Prostate gland (tissue), 2 donors: ENCODE measurements at regions of chr19 and their contacts with region 1.

Region 1: GRCh38 chr19:3984908-3985642 is at the start of gene EEF2:
- DNase-seq: peak; percentile 86
- H3K4me3 ChIP-seq: peak within 1 kb of the TSS; percentile 91 to 96
- H3K27ac ChIP-seq: peak within 1 kb of the TSS; percentile 97 to 98
- H3K4me1 ChIP-seq: peaks cover 16% of the 10 kb centered on the region
- H3K27me3 ChIP-seq: no peaks in the 10 kb centered on the region
- CTCF ChIP-seq: peak in 1 of 4 experiments; percentile 19
- POLR2A ChIP-seq: peak; percentile 99
- total RNA-seq, gene EEF2: 1,974 to 1,998 TPM

Region 2: DNA sequence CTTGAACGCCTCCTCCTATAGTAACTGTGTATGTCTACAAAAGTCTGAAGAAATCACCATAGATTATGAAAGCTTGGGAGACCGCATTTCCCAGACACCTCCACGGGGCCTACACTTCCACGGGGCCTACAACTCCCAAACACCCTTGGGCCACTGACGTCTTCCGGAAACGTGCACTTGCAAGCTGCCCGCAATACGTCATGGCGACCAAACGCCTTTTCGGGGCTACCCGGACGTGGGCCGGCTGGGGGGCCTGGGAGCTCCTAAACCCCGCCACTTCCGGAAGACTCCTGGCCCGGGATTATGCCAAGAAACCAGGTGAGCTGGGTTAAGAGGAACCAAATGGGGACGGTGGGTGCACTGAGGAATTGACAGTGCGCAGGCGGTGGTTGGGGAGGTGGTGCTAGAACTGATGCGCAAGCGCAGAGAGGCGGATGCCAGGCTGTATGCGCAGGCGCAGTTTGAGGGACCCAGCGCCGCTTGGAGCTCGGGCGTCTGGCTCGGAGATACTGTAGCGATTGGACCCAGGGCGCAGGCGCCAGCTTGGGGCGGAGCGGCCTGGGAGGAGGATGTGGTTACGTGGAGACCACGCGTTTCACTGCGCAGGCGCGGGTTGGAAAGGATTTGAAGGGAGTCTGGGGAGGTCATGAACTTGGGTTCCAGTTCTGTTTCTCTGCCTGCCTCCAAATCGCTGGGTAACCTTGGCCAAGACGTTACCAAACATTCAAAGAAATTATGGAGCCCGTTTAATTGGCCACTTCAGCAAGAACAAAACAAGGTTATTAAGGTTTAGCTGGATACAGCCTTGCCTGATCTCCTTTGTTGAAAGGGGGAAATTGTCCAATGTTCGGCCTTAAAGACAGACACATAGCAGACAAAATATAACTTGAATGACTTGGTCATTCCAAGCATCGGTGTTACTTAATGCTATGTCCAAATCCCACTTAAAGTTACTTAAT is 222.3 kb before region 1 on chr19 and contains the start of gene MRPL54:
- intact Hi-C with region 1: loop called (anchors 5 kb)
- DNase-seq: peak; percentile 99
- H3K4me3 ChIP-seq: peak within 1 kb of the TSS; percentile 66 to 78
- H3K27ac ChIP-seq: peak within 1 kb of the TSS; percentile 96 to 99
- H3K4me1 ChIP-seq: peaks cover 3% of the 10 kb centered on the region
- H3K27me3 ChIP-seq: no peaks in the 10 kb centered on the region
- CTCF ChIP-seq: peak in 2 of 4 experiments; percentile 27 to 28
- POLR2A ChIP-seq: peak; percentile 51
- total RNA-seq, gene MRPL54: 69.7 to 105 TPM

Region 3: DNA sequence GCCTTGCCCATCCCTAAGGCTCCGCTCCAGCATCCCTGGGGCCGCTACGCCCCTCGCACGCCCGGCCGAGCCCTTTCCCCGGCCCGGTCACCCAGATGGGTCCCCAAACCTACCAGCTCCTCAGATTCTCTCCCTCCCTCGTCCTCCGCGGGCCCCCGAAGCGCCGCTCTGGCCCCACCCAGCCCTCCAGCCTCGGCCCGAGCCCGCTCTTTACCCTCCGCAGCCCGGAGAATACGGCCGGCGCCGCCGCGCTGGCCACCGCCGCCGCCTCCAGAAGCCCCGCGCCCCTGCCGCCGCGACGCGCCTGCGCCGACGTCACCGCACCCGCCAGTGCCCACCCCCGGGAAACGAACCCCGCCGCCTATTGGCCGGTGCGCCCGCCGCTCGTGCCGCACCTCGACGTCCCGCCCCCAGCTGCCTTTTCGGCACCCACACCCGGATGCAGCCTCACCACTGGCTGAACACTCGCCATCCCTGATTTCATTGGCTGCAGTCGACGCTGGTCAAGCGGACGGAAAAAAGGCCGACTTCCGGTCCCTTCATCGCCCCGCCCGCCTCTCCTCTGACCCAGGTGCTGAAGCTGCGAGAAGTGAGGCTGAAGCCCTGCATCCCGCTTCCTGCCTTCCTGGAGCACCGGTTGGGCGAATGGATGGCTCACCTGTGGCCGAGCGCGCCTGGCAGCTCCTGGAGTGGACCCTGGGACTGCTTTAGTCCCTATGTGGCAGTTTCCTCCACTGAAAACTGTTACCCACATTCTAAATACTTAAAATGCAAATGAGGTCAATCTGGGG is 14.1 kb before region 1 on chr19 and contains the start of gene DAPK3:
- intact Hi-C with region 1: loop called (anchors 2 kb)
- DNase-seq: peak; percentile 98
- H3K4me3 ChIP-seq: peak within 1 kb of the TSS; percentile 97 to 99
- H3K27ac ChIP-seq: peak within 1 kb of the TSS; percentile 94 to 97
- H3K4me1 ChIP-seq: peaks cover 7% of the 10 kb centered on the region
- H3K27me3 ChIP-seq: no peaks in the 10 kb centered on the region
- CTCF ChIP-seq: peak; percentile 27 to 83 (median 48)
- POLR2A ChIP-seq: peak; percentile 93
- total RNA-seq, gene DAPK3: 87.1 to 107 TPM

Region 4: DNA sequence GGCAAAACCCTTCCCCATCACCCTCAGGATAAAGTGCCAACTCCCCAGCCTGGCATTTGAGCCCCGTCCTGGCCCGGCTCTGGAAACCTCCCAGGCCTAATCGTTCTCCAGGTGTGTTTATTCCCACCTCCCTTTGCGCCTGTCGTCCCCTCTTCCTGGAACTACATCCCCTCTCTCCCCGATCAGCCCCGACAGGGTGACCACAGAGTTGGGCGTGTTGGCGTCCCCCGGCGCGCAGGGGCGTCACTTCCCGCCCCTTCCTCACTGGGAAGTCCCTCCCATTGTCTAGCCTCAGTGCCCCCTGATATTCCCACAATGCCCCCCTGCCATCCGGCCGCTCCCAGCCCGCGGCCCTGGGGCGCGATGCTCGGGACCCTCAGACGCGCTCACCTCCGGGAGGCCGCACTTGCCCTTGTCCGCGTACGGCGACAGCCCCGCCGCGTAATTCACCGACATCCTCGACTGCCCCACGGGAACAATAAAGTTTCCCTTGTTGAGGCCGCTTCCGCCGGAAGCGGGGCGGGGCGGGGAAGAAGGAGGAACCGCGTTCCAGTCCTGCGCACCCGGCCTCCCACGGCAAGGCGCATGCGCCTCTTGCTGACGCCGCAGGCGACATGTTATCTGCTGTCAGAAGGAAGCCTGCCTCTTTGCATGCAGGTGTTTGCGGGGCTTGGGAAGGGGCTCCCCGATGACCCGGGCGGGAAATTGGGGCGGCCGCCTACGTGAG is 197.2 kb after region 1 on chr19 and contains the starts of genes ANKRD24 and SIRT6:
- intact Hi-C with region 1: loop called (anchors 5 kb)
- DNase-seq: peak; percentile 95
- H3K4me3 ChIP-seq: peak within 1 kb of the TSS; percentile 92 to 96
- H3K27ac ChIP-seq: peak within 1 kb of the TSS; percentile 78 to 83
- H3K4me1 ChIP-seq: peaks cover 9% of the 10 kb centered on the region
- H3K27me3 ChIP-seq: no peaks in the 10 kb centered on the region
- CTCF ChIP-seq: peak in 2 of 4 experiments; percentile 10 to 30
- POLR2A ChIP-seq: peak; percentile 65
- total RNA-seq, gene ANKRD24: 3.6 to 12.0 TPM
- total RNA-seq, gene SIRT6: 23.5 to 37.3 TPM

Region 5: GRCh38 chr19:4208385-4209094 is 223.5 kb after region 1 on chr19:
- intact Hi-C with region 1: loop called (anchors 5 kb)
- DNase-seq: no peak
- H3K4me3 ChIP-seq: no peak overlapping the region
- H3K27ac ChIP-seq: no peak overlapping the region
- H3K4me1 ChIP-seq: no peaks in the 10 kb centered on the region
- H3K27me3 ChIP-seq: no peaks in the 10 kb centered on the region
- CTCF ChIP-seq: peak in 3 of 4 experiments; percentile 13 to 21 (median 17)
- POLR2A ChIP-seq: no peak

Region 6: GRCh38 chr19:4278419-4279266 is 293.6 kb after region 1 on chr19 and contains the start of gene SHD:
- intact Hi-C with region 1: no loop called
- DNase-seq: no peak
- H3K4me3 ChIP-seq: peak within 1 kb of the TSS; percentile 13 to 30
- H3K27ac ChIP-seq: no peak within 1 kb of the TSS
- H3K4me1 ChIP-seq: no peaks in the 10 kb centered on the region
- H3K27me3 ChIP-seq: peaks cover 14% of the 10 kb centered on the region
- CTCF ChIP-seq: no peak
- POLR2A ChIP-seq: no peak
- total RNA-seq, gene SHD: 0.62 to 18.0 TPM